Caco-2 (cell line): ENCODE measurements at regions of chr3 and their contacts with region 1.

Region 1: GRCh38 chr3:3200632-3201212 is 21.2 kb upstream of the CRBN start:
- DNase-seq: peak; percentile 41 to 62
- H3K4me3 ChIP-seq: no peak overlapping the region
- H3K4me3 Mint-ChIP-seq: no peak overlapping the region
- H3K27ac Mint-ChIP-seq: no peak overlapping the region
- H3K4me1 ChIP-seq: no peaks in the 10 kb centered on the region
- H3K4me1 Mint-ChIP-seq: peaks cover 6% of the 10 kb centered on the region
- H3K27me3 ChIP-seq: no peaks in the 10 kb centered on the region
- H3K27me3 Mint-ChIP-seq: peaks cover 3% of the 10 kb centered on the region
- CTCF ChIP-seq: peak; percentile 64 to 68

Region 2: GRCh38 chr3:3334491-3334890 is 133.8 kb after region 1 on chr3:
- CTCF ChIA-PET with region 1: no interaction called
- POLR2A ChIA-PET with region 1: no interaction called
- intact Hi-C with region 1: loop called (anchors 10 kb)
- DNase-seq: no peak
- H3K4me3 ChIP-seq: no peak overlapping the region
- H3K4me3 Mint-ChIP-seq: no peak overlapping the region
- H3K27ac Mint-ChIP-seq: no peak overlapping the region
- H3K4me1 ChIP-seq: no peaks in the 10 kb centered on the region
- H3K4me1 Mint-ChIP-seq: no peaks in the 10 kb centered on the region
- H3K27me3 ChIP-seq: no peaks in the 10 kb centered on the region
- H3K27me3 Mint-ChIP-seq: no peaks in the 10 kb centered on the region
- CTCF ChIP-seq: no peak

Region 3: GRCh38 chr3:3998140-3998922 is 797.6 kb after region 1 on chr3:
- CTCF ChIA-PET with region 1: interaction called, 11 read pairs
- POLR2A ChIA-PET with region 1: no interaction called
- intact Hi-C with region 1: loop called (anchors 1 kb)
- DNase-seq: peak; percentile 38 to 44
- H3K4me3 ChIP-seq: no peak overlapping the region
- H3K4me3 Mint-ChIP-seq: no peak overlapping the region
- H3K27ac Mint-ChIP-seq: no peak overlapping the region
- H3K4me1 ChIP-seq: no peaks in the 10 kb centered on the region
- H3K4me1 Mint-ChIP-seq: peaks cover 8% of the 10 kb centered on the region
- H3K27me3 ChIP-seq: no peaks in the 10 kb centered on the region
- H3K27me3 Mint-ChIP-seq: no peaks in the 10 kb centered on the region
- CTCF ChIP-seq: peak; percentile 40 to 60

Region 4: DNA sequence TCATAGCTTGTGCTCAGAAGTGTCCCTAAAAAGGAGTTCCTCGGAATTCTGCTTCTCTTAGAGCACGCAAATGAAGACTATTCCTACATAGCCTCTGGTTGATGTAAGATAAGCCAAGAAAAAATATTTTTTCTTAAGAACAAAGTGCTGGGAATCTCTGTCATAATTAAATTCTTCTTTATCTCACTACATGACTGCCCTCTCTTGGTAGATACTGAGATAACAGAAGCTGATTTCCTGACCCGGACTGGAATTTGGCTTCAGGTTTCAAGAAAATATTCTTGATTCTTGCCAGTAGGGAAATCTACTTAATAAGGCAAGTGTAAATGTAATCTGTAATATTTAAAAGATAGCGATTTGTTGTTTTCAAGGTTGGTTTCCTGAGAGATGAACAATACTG is 1071.1 kb after region 1 on chr3:
- CTCF ChIA-PET with region 1: interaction called, 8 read pairs
- POLR2A ChIA-PET with region 1: no interaction called
- intact Hi-C with region 1: loop called (anchors 1 kb)
- DNase-seq: peak in 1 of 2 experiments; percentile 21
- H3K4me3 ChIP-seq: no peak overlapping the region
- H3K4me3 Mint-ChIP-seq: no peak overlapping the region
- H3K27ac Mint-ChIP-seq: no peak overlapping the region
- H3K4me1 ChIP-seq: no peaks in the 10 kb centered on the region
- H3K4me1 Mint-ChIP-seq: no peaks in the 10 kb centered on the region
- H3K27me3 ChIP-seq: no peaks in the 10 kb centered on the region
- H3K27me3 Mint-ChIP-seq: peaks cover 5% of the 10 kb centered on the region
- CTCF ChIP-seq: peak; percentile 57 to 65

Region 5: DNA sequence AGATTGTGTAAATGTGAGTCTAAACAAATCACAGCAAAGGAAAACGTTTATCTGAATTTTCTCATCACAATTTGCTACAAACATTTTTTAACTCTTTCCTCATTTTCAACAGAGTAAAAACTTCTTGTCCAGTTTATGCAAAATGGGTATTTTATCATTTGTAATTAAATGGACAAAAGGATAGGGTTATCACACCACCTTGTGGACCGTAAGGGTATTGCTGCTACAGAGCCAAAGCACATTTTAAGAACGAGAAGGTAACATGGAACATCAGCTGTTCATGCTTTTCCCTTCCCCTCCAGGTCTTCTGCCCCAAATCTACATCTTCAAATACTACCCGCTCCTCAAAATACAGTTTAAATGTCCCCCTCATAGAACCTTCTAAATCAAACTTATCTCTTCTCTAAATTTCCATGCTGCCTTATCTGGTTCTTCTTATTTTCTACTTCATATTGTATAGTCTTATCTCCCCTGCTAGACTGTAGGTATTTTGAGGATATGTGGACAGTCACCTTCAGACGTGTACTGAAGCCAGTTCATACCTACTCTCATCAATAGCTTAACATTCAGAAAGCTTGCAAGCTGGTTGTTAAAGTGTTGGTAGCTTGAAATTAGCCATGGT is 1089.7 kb after region 1 on chr3:
- CTCF ChIA-PET with region 1: interaction called, 5 read pairs
- POLR2A ChIA-PET with region 1: no interaction called
- intact Hi-C with region 1: loop called (anchors 1 kb)
- DNase-seq: peak in 1 of 2 experiments; percentile 31
- H3K4me3 ChIP-seq: no peak overlapping the region
- H3K4me3 Mint-ChIP-seq: no peak overlapping the region
- H3K27ac Mint-ChIP-seq: no peak overlapping the region
- H3K4me1 ChIP-seq: no peaks in the 10 kb centered on the region
- H3K4me1 Mint-ChIP-seq: no peaks in the 10 kb centered on the region
- H3K27me3 ChIP-seq: no peaks in the 10 kb centered on the region
- H3K27me3 Mint-ChIP-seq: peaks cover 4% of the 10 kb centered on the region
- CTCF ChIP-seq: peak; percentile 72 to 81